Naive thymus-derived CD4-positive, alpha-beta T cell (primary cell): ENCODE measurements at regions of chr6 and their contacts with region 1.

Region 1: DNA sequence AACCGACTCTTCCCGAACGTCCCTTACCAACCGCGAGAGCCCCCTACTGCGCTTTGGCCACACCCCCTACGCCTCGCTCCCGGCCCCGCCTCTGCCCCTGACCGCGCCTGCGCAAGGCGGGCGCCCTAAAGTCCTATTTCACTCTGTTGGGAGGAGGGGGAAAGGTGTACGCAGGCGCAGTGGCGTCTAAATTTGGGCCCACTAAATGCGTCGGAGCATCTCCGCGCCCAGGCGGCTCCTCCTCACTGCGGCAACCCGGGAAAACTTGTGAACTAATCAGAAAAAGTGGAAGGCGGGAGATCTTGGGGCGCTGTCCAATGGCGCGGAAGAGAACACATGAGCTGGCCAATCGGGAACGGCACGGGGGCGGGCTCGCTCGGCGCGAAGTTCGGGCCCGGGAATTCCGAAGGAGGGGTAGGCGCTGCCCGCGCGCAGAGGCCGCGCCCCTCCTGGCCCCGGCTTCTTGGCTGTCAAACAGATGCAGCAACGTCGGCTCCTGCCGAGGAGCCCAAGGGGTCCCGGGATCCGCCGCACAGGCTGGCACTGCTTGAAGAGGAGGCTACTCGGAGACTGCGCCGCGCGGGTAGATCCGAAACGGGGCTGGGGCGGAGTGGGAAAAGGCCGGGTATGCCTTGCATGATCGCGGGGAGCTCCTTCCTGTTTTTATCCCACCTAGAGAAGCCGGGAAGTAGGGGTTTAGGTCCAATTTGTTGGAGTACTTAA is at the start of gene TCF19:
- DNase-seq: peak; percentile 97 to 99 (median 98)
- ATAC-seq: peak; percentile 96
- H3K4me3 ChIP-seq: peak within 1 kb of the TSS; percentile 82
- H3K4me3 Mint-ChIP-seq: peak within 1 kb of the TSS; percentile 82 to 97 (median 91)
- H3K27ac ChIP-seq: peak within 1 kb of the TSS; percentile 82
- H3K27ac Mint-ChIP-seq: peak within 1 kb of the TSS; percentile 62 to 96 (median 89)
- H3K4me1 ChIP-seq: peaks cover 12 to 18% of the 10 kb centered on the region in 2 donors
- H3K4me1 Mint-ChIP-seq: peaks cover 21 to 56% (median 29%) of the 10 kb centered on the region in 7 donors
- H3K27me3 ChIP-seq: no peaks in the 10 kb centered on the region
- H3K27me3 Mint-ChIP-seq: peaks cover 0 to 2% (median 0%) of the 10 kb centered on the region in 5 donors
- total RNA-seq, gene TCF19: 4.3 to 78.9 (median 9.4) TPM

Region 2: GRCh38 chr6:30326526-30327260 is 831.6 kb before region 1 on chr6 and contains the start of gene TRIM39:
- CTCF ChIA-PET with region 1: no interaction called
- POLR2A ChIA-PET with region 1: no interaction called
- intact Hi-C with region 1: loop called in 1 of 2 experiments (anchors 5 kb)
- DNase-seq: peak; percentile 88 to 94 (median 92)
- ATAC-seq: peak; percentile 76
- H3K4me3 ChIP-seq: peak within 1 kb of the TSS; percentile 70
- H3K4me3 Mint-ChIP-seq: peak within 1 kb of the TSS; percentile 93 to 99 (median 97)
- H3K27ac ChIP-seq: peak within 1 kb of the TSS; percentile 100
- H3K27ac Mint-ChIP-seq: peak within 1 kb of the TSS; percentile 92 to 100 (median 99)
- H3K4me1 ChIP-seq: peaks cover 34 to 48% of the 10 kb centered on the region in 2 donors
- H3K4me1 Mint-ChIP-seq: peaks cover 42 to 70% (median 63%) of the 10 kb centered on the region in 7 donors
- H3K27me3 ChIP-seq: no peaks in the 10 kb centered on the region
- H3K27me3 Mint-ChIP-seq: no peaks in the 10 kb centered on the region
- total RNA-seq, gene TRIM39: 12.8 to 42.1 (median 26.4) TPM

Region 3: DNA sequence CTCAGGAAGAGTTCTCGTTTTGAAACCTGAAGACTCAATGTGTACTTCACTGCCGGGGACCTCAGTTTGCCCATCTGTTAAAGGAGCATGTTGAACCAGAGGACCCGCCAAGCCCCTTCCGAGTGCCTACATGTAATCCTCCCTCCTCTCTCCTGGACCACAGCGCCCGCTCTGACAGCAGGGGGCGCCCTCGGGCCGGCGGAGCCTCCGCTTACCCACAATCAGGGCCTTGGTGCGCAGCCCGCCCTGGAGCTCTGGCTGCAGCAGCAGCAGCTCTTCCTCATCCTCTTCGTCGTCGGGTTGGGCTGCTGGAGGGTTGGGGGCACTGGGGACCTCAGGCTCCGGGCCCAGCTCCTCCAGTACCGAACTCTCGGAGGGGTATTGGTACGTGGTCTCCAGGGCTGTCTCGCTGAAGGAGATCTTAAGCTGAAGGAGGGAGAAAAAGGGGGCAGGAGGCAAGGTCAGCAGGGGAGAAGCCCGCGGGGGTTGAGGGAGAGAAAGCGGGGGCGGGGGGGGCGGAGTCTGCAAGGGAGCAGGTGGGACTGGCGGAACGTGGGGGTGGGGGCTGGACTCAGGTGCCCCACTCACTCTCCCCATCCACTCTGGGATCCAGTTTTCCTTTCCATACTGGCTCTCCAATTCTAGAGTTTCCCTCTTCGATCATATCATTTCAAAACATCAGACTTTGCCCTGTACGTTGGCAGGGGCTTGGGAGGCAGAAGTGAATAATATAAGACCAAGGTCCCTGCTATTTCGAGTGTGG is 479.2 kb before region 1 on chr6:
- CTCF ChIA-PET with region 1: no interaction called
- POLR2A ChIA-PET with region 1: no interaction called
- intact Hi-C with region 1: loop called in 1 of 2 experiments (anchors 5 kb)
- DNase-seq: peak; percentile 86 to 97 (median 92)
- ATAC-seq: peak; percentile 65
- H3K4me3 ChIP-seq: peak overlapping the region; percentile 98
- H3K4me3 Mint-ChIP-seq: peak overlapping the region; percentile 90 to 100 (median 97)
- H3K27ac ChIP-seq: peak overlapping the region; percentile 95
- H3K27ac Mint-ChIP-seq: peak overlapping the region; percentile 85 to 99 (median 97)
- H3K4me1 ChIP-seq: peaks cover 5 to 24% of the 10 kb centered on the region in 2 donors
- H3K4me1 Mint-ChIP-seq: peaks cover 20 to 47% (median 38%) of the 10 kb centered on the region in 7 donors
- H3K27me3 ChIP-seq: no peaks in the 10 kb centered on the region
- H3K27me3 Mint-ChIP-seq: no peaks in the 10 kb centered on the region

Region 4: GRCh38 chr6:31139599-31139998 is 18.7 kb before region 1 on chr6:
- CTCF ChIA-PET with region 1: no interaction called
- POLR2A ChIA-PET with region 1: interaction called, 3 read pairs
- intact Hi-C with region 1: loop called (anchors 1 to 2 kb)
- DNase-seq: no peak
- ATAC-seq: no peak
- H3K4me3 ChIP-seq: no peak overlapping the region
- H3K4me3 Mint-ChIP-seq: peak overlapping the region in 1 of 10 donors; percentile 11
- H3K27ac ChIP-seq: no peak overlapping the region
- H3K27ac Mint-ChIP-seq: no peak overlapping the region
- H3K4me1 ChIP-seq: peaks cover 0 to 5% of the 10 kb centered on the region in 2 donors
- H3K4me1 Mint-ChIP-seq: peaks cover 4 to 8% (median 7%) of the 10 kb centered on the region in 7 donors
- H3K27me3 ChIP-seq: no peaks in the 10 kb centered on the region
- H3K27me3 Mint-ChIP-seq: peaks cover 0 to 3% (median 0%) of the 10 kb centered on the region in 5 donors

Region 5: DNA sequence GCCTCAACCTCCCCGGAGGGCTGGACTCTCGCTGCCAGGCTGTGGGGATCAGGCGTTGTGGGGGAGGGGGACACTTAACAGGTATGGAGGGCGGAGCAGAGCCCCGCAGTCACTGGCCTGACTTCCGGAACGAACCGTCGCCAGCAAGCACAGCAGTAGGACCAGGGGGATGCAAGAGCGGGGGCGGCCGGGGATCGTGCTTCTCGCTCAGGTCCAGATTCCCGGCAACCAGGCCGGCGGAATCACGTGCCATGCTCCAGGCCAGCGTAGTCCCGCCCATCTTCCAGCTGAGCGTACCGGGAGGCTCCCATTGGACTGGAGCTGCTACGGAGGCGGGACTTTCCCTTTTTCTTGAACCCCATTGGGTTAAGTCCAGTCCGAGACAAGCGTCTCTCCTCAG is 22.2 kb after region 1 on chr6:
- CTCF ChIA-PET with region 1: no interaction called
- POLR2A ChIA-PET with region 1: no interaction called
- intact Hi-C with region 1: loop called in 1 of 2 experiments (anchors 1 kb)
- DNase-seq: peak in 7 of 9 donors; percentile 49 to 69 (median 59)
- ATAC-seq: peak; percentile 100
- H3K4me3 ChIP-seq: peak overlapping the region; percentile 64
- H3K4me3 Mint-ChIP-seq: peak overlapping the region; percentile 69 to 92 (median 83)
- H3K27ac ChIP-seq: peak overlapping the region; percentile 63
- H3K27ac Mint-ChIP-seq: peak overlapping the region in 8 of 9 donors; percentile 29 to 91 (median 64)
- H3K4me1 ChIP-seq: peaks cover 0 to 4% of the 10 kb centered on the region in 2 donors
- H3K4me1 Mint-ChIP-seq: peaks cover 0 to 17% (median 8%) of the 10 kb centered on the region in 7 donors
- H3K27me3 ChIP-seq: no peaks in the 10 kb centered on the region
- H3K27me3 Mint-ChIP-seq: no peaks in the 10 kb centered on the region

Region 6: DNA sequence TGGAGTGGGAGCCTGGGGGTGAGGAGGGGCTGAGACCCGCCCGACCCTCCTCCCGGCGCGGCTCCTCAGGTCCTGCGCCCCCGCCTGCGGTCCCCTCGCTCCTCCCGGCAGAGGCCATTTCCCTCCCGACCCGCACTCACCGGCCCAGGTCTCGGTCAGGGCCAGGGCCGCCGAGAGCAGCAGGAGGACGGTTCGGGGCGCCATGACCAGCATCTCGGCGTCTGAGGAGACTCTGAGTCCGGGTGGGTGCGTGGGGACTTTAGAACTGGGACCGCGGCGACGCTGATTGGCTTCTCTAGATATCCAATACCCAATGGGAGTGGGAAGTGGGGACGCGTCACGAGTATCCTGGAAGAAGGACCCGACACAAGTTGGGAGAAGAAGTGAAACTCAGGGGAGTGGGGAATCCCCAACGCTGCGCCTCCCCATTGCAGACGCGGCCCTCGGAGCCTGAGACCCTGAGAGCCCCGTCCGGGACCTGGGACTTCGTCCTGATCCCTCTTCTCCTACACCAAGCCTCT is 198.7 kb after region 1 on chr6 and contains the start of gene HLA-B:
- CTCF ChIA-PET with region 1: no interaction called
- POLR2A ChIA-PET with region 1: interaction called, 6 read pairs
- intact Hi-C with region 1: loop called in 1 of 2 experiments (anchors 1 kb)
- DNase-seq: peak; percentile 65 to 91 (median 82)
- ATAC-seq: peak; percentile 90
- H3K4me3 ChIP-seq: peak within 1 kb of the TSS; percentile 68
- H3K4me3 Mint-ChIP-seq: peak within 1 kb of the TSS; percentile 80 to 100 (median 98)
- H3K27ac ChIP-seq: peak within 1 kb of the TSS; percentile 100
- H3K27ac Mint-ChIP-seq: peak within 1 kb of the TSS; percentile 99 to 100 (median 100)
- H3K4me1 ChIP-seq: peaks cover 28 to 33% of the 10 kb centered on the region in 2 donors
- H3K4me1 Mint-ChIP-seq: peaks cover 49 to 66% (median 58%) of the 10 kb centered on the region in 7 donors
- H3K27me3 ChIP-seq: no peaks in the 10 kb centered on the region
- H3K27me3 Mint-ChIP-seq: peaks cover 0 to 19% (median 0%) of the 10 kb centered on the region in 5 donors
- total RNA-seq, gene HLA-B: 5,136 to 7,364 (median 5,516) TPM